ENCODE measurements at regions of chr20 and their contacts with region 1.

Region 1: GRCh38 chr20:48937674-48938073 is 16.2 kb downstream of the ARFGEF2 start:
- DNase-seq: no peak
- H3K4me3 Mint-ChIP-seq: no peak overlapping the region
- H3K27ac Mint-ChIP-seq: no peak overlapping the region
- H3K4me1 Mint-ChIP-seq: peaks cover 22% of the 10 kb centered on the region
- H3K27me3 Mint-ChIP-seq: no peaks in the 10 kb centered on the region
- CTCF ChIP-seq: no peak

Region 2: DNA sequence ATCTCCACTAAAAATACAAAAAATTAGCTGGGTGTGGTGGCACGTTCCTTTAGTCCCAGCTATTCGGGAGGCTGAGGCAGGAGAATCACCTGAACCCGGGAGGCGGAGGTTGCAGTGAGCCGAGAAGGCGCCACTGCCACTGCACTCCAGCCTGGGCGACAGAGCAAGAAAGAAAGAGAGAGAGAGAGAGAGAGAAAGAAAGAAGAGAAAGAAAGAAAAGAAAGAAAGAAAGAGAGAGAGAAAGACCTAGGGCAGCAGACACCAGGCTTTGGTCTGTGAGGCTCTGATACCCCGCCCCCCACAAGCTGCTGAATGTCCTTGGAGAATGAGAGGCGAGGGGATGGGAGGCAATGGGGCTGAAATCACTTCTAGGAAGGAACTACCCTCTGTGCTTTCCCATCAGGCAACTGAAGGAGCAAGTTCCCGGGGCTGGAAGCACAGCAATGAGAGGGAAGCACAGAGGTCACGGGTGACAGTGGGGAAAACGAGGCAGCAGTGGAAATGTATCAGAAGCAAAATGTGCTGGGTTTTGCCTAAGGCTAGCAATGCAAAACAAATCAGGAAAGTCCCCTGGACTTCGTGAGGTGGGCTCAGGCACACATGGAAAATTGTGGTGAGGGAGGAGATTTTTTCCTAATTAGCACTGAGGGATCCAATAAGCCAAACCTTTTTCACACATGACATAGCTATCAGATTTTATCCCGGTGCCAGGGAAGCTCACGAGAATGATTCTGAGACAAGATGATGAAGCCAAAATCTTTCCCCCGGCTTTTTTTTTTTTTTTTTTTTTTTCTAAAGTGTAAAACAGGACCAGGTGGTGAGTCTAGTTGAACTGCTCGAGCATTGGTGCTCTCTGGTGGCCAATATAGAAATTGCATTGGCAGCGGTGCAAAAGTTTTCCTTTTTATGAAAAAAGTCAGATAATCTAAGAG is 33.0 kb before region 1 on chr20:
- CTCF ChIA-PET with region 1: interaction called, 11 read pairs
- intact Hi-C with region 1: no loop called
- DNase-seq: peak; percentile 75
- H3K4me3 Mint-ChIP-seq: no peak overlapping the region
- H3K27ac Mint-ChIP-seq: no peak overlapping the region
- H3K4me1 Mint-ChIP-seq: peaks cover 33% of the 10 kb centered on the region
- H3K27me3 Mint-ChIP-seq: peaks cover 85% of the 10 kb centered on the region
- CTCF ChIP-seq: peak; percentile 87